Transverse colon (tissue), 4 donors: ENCODE measurements at regions of chr11 and their contacts with region 1.

Region 1: DNA sequence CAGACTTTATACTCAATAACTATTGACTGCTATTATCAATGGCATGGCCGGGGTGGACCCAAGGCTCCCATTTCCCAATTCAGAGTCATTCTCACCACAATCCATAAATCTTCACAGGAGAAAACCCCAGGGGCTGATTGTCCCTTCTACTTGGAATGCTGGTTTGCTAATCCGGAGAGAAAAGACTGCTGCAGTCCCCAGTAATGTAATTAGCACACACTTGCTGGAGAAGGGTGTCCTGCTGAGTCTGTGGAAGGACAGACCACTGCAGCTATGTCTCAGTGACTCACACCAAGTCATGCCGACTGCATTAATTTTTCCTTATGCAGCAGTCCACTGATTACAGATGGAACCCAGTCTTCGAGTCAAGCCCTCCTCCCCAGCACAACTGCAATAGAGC is 5.9 kb upstream of the ETS1 start:
- DNase-seq: no peak
- H3K4me3 ChIP-seq: no peak overlapping the region
- H3K27ac ChIP-seq: no peak overlapping the region
- H3K4me1 ChIP-seq: no peaks in the 10 kb centered on the region
- H3K27me3 ChIP-seq: no peaks in the 10 kb centered on the region
- CTCF ChIP-seq: no peak
- EP300 ChIP-seq: no peak
- POLR2A ChIP-seq: no peak

Region 2: DNA sequence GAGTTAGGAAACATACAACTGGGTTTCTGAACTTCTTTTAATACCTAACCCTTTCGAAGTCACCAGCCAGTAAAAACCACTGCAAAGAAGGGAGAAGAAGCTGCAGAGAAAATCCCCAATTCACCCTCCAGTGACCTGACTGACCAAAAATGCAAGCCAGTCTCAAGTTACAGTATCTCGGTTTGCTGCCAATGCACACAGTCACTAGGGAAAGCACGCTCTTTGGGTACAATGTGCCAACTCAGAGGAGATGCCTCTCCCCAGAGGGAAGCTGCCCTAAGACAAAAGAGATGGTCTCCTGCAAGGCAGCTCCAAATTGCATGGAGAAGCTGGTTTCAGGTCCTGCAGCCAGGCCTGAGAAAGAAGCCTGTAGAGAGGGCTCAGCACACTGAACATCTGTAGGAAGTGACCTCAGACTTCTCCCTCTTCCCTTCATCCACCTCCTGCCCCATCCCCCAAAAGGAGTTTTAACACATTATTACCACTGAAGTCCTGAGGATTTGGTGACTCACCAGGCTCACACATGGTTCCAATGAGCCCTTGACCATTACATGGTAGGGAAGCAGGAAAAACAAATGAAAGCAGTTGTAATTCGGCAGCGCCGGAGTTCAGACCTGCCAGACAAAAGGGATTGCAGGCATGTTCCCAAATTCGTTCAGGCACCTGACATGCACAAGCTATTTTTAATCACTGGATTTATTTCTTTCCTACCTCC is 96.1 kb before region 1 on chr11:
- in situ Hi-C with region 1: no loop called
- intact Hi-C with region 1: no loop called
- DNase-seq: no peak
- H3K4me3 ChIP-seq: peak overlapping the region in 1 of 4 donors; percentile 20
- H3K27ac ChIP-seq: peak overlapping the region; percentile 75 to 94 (median 92)
- H3K4me1 ChIP-seq: peaks cover 19 to 94% (median 52%) of the 10 kb centered on the region in 4 donors
- H3K27me3 ChIP-seq: no peaks in the 10 kb centered on the region
- CTCF ChIP-seq: no peak
- EP300 ChIP-seq: no peak
- POLR2A ChIP-seq: no peak

Region 3: GRCh38 chr11:128568166-128568778 is 25.0 kb before region 1 on chr11:
- in situ Hi-C with region 1: no loop called
- intact Hi-C with region 1: no loop called
- DNase-seq: no peak
- H3K4me3 ChIP-seq: no peak overlapping the region
- H3K27ac ChIP-seq: peak overlapping the region in 1 of 4 donors; percentile 8
- H3K4me1 ChIP-seq: peaks cover 0 to 29% (median 20%) of the 10 kb centered on the region in 4 donors
- H3K27me3 ChIP-seq: no peaks in the 10 kb centered on the region
- CTCF ChIP-seq: no peak
- EP300 ChIP-seq: no peak
- POLR2A ChIP-seq: no peak

Region 4: DNA sequence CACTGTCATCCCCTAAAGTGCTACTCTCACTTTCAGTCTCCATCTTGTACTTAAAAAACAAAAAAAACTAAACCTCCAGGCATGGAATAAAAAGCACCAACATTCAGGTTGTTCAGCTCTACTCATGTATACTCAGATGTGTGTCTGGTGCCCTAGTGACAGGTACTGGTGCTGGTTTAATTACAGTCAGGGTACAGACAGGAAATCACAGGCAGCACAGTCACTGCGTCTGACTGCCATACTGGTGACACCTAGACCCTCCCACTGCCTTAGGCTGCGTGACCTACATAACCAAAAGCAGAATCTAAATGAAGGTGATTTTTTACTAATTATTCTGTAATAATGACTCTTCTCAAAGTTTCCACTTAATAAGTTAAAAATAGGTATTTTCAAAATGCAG is 598.9 kb after region 1 on chr11 and contains the start of gene ARHGAP32:
- in situ Hi-C with region 1: no loop called
- intact Hi-C with region 1: loop called (anchors 5 kb)
- DNase-seq: peak; percentile 15
- H3K4me3 ChIP-seq: no peak within 1 kb of the TSS
- H3K27ac ChIP-seq: peak within 1 kb of the TSS in 3 of 4 donors; percentile 26 to 43 (median 27)
- H3K4me1 ChIP-seq: peaks cover 12 to 46% (median 23%) of the 10 kb centered on the region in 4 donors
- H3K27me3 ChIP-seq: no peaks in the 10 kb centered on the region
- CTCF ChIP-seq: no peak
- EP300 ChIP-seq: no peak
- POLR2A ChIP-seq: no peak
- total RNA-seq, gene ARHGAP32: 66.9 to 86.9 (median 74.8) TPM